Naive thymus-derived CD4-positive, alpha-beta T cell (primary cell): ENCODE measurements at regions of chr16 and their contacts with region 1.

Region 1: DNA sequence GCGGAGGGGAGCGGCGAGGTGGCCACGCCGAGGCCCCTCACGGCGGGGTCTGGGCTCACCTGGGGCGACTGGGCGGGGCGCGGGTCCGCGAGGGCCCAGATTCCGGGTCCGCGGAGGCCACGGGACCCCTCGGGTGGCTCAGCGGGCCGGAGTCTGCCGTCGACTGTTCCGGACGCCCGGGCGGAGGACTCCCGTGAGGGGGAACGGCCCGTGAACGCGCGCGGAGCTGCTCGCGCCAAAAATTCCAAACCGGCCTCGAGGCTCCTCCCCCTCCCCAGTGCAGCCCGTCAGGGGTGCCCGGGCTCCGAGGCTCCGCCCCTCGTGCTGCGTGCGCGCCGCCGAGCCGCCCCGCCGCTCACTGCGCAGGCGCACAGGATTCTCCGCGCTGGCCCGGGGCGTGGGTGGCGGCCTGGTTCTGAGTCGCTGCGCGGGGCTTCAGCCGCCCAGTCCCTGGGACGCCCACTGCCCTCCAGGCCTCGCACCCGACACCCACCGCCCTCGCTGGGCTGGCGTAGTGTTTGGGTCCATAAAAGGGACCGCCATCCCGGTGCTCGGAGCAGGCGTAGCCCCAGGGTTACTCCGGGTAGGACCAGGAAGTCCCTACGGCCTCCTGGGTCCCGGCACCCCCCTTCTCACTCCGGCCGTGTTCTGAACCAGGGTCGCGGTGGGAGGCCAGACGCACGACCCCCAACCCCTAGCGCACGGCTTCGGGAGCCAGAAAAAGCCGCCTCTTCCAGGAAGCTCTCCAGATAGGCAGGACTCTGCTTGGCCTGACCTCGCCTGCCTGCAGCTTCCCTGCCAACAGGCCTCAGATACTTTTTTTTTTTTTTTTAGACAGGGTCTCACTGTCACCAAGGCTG is at the start of gene PKMYT1:
- DNase-seq: peak; percentile 86 to 100 (median 96)
- ATAC-seq: peak; percentile 97
- H3K4me3 ChIP-seq: peak within 1 kb of the TSS; percentile 73
- H3K4me3 Mint-ChIP-seq: peak within 1 kb of the TSS; percentile 72 to 91 (median 82)
- H3K27ac ChIP-seq: peak within 1 kb of the TSS; percentile 94
- H3K27ac Mint-ChIP-seq: peak within 1 kb of the TSS in 8 of 9 donors; percentile 65 to 89 (median 78)
- H3K4me1 ChIP-seq: peaks cover 5 to 6% of the 10 kb centered on the region in 2 donors
- H3K4me1 Mint-ChIP-seq: peaks cover 9 to 29% (median 14%) of the 10 kb centered on the region in 7 donors
- H3K27me3 ChIP-seq: no peaks in the 10 kb centered on the region
- H3K27me3 Mint-ChIP-seq: peaks cover 0 to 2% (median 0%) of the 10 kb centered on the region in 5 donors
- total RNA-seq, gene PKMYT1: 0.93 to 89.1 TPM in 2 of 5 experiments, not detected in the others

Region 2: GRCh38 chr16:2883027-2883851 is 97.2 kb before region 1 on chr16 and contains the start of gene FLYWCH2:
- CTCF ChIA-PET with region 1: no interaction called
- POLR2A ChIA-PET with region 1: interaction called, 3 read pairs
- intact Hi-C with region 1: loop called in 1 of 2 experiments (anchors 5 kb)
- DNase-seq: peak; percentile 98 to 100 (median 100)
- ATAC-seq: peak; percentile 89
- H3K4me3 ChIP-seq: peak within 1 kb of the TSS; percentile 69
- H3K4me3 Mint-ChIP-seq: peak within 1 kb of the TSS; percentile 90 to 97 (median 94)
- H3K27ac ChIP-seq: peak within 1 kb of the TSS; percentile 84
- H3K27ac Mint-ChIP-seq: peak within 1 kb of the TSS; percentile 93 to 99 (median 97)
- H3K4me1 ChIP-seq: peaks cover 6% of the 10 kb centered on the region in 2 donors
- H3K4me1 Mint-ChIP-seq: peaks cover 0 to 18% (median 13%) of the 10 kb centered on the region in 7 donors
- H3K27me3 ChIP-seq: no peaks in the 10 kb centered on the region
- H3K27me3 Mint-ChIP-seq: no peaks in the 10 kb centered on the region
- total RNA-seq, gene FLYWCH2: 13.6 to 30.4 (median 24.0) TPM

Region 3: GRCh38 chr16:2911580-2912329 is 68.7 kb before region 1 on chr16 and contains the start of gene FLYWCH1:
- CTCF ChIA-PET with region 1: no interaction called
- POLR2A ChIA-PET with region 1: interaction called, 3 read pairs
- intact Hi-C with region 1: loop called in 1 of 2 experiments (anchors 5 kb)
- DNase-seq: peak; percentile 94 to 99 (median 97)
- ATAC-seq: peak; percentile 99
- H3K4me3 ChIP-seq: peak within 1 kb of the TSS; percentile 85
- H3K4me3 Mint-ChIP-seq: peak within 1 kb of the TSS; percentile 80 to 97 (median 92)
- H3K27ac ChIP-seq: peak within 1 kb of the TSS; percentile 78
- H3K27ac Mint-ChIP-seq: peak within 1 kb of the TSS; percentile 80 to 96 (median 87)
- H3K4me1 ChIP-seq: peaks cover 7 to 8% of the 10 kb centered on the region in 2 donors
- H3K4me1 Mint-ChIP-seq: peaks cover 11 to 39% (median 30%) of the 10 kb centered on the region in 7 donors
- H3K27me3 ChIP-seq: no peaks in the 10 kb centered on the region
- H3K27me3 Mint-ChIP-seq: peaks cover 0 to 10% (median 0%) of the 10 kb centered on the region in 5 donors
- total RNA-seq, gene FLYWCH1: 48.6 to 149 (median 87.0) TPM

Region 4: GRCh38 chr16:2926650-2927646 is 53.5 kb before region 1 on chr16:
- CTCF ChIA-PET with region 1: interaction called, 3 read pairs
- POLR2A ChIA-PET with region 1: no interaction called
- intact Hi-C with region 1: loop called in 1 of 2 experiments (anchors 1 kb)
- DNase-seq: peak; percentile 64 to 91 (median 84)
- ATAC-seq: peak; percentile 100
- H3K4me3 ChIP-seq: no peak overlapping the region
- H3K4me3 Mint-ChIP-seq: peak overlapping the region in 7 of 10 donors; percentile 0 to 48 (median 29)
- H3K27ac ChIP-seq: no peak overlapping the region
- H3K27ac Mint-ChIP-seq: peak overlapping the region in 7 of 9 donors; percentile 0 to 63 (median 48)
- H3K4me1 ChIP-seq: peaks cover 5 to 10% of the 10 kb centered on the region in 2 donors
- H3K4me1 Mint-ChIP-seq: peaks cover 9 to 19% (median 16%) of the 10 kb centered on the region in 7 donors
- H3K27me3 ChIP-seq: no peaks in the 10 kb centered on the region
- H3K27me3 Mint-ChIP-seq: no peaks in the 10 kb centered on the region

Region 5: GRCh38 chr16:2960183-2961032 is 20.0 kb before region 1 on chr16:
- CTCF ChIA-PET with region 1: interaction called, 8 read pairs
- POLR2A ChIA-PET with region 1: interaction called, 17 read pairs
- intact Hi-C with region 1: loop called in 1 of 2 experiments (anchors 1 kb)
- DNase-seq: no peak
- ATAC-seq: no peak
- H3K4me3 ChIP-seq: no peak overlapping the region
- H3K4me3 Mint-ChIP-seq: peak overlapping the region in 1 of 10 donors; percentile 37
- H3K27ac ChIP-seq: no peak overlapping the region
- H3K27ac Mint-ChIP-seq: peak overlapping the region in 1 of 9 donors; percentile 18
- H3K4me1 ChIP-seq: peaks cover 9 to 24% of the 10 kb centered on the region in 2 donors
- H3K4me1 Mint-ChIP-seq: peaks cover 5 to 23% (median 15%) of the 10 kb centered on the region in 7 donors
- H3K27me3 ChIP-seq: peaks cover 5 to 6% of the 10 kb centered on the region in 2 donors
- H3K27me3 Mint-ChIP-seq: peaks cover 5 to 31% (median 20%) of the 10 kb centered on the region in 5 donors

Region 6: GRCh38 chr16:2968738-2969544 is 11.5 kb before region 1 on chr16 and contains the start of gene PAQR4:
- CTCF ChIA-PET with region 1: interaction called, 4 read pairs
- POLR2A ChIA-PET with region 1: interaction called, 17 read pairs
- intact Hi-C with region 1: loop called (anchors 1 kb)
- DNase-seq: peak; percentile 49 to 91 (median 71)
- ATAC-seq: peak; percentile 88
- H3K4me3 ChIP-seq: peak within 1 kb of the TSS; percentile 64
- H3K4me3 Mint-ChIP-seq: peak within 1 kb of the TSS; percentile 59 to 80 (median 75)
- H3K27ac ChIP-seq: no peak within 1 kb of the TSS
- H3K27ac Mint-ChIP-seq: peak within 1 kb of the TSS in 2 of 9 donors; percentile 16 to 70
- H3K4me1 ChIP-seq: peaks cover 19 to 28% of the 10 kb centered on the region in 2 donors
- H3K4me1 Mint-ChIP-seq: peaks cover 10 to 32% (median 24%) of the 10 kb centered on the region in 7 donors
- H3K27me3 ChIP-seq: peaks cover 0 to 28% of the 10 kb centered on the region in 2 donors
- H3K27me3 Mint-ChIP-seq: peaks cover 10 to 26% (median 16%) of the 10 kb centered on the region in 5 donors
- total RNA-seq, gene PAQR4: 0.40 to 39.4 (median 0.79) TPM

Region 7: GRCh38 chr16:3003582-3004302 is 23.3 kb after region 1 on chr16:
- CTCF ChIA-PET with region 1: interaction called, 3 read pairs
- POLR2A ChIA-PET with region 1: interaction called, 6 read pairs
- intact Hi-C with region 1: loop called (anchors 1 to 2 kb)
- DNase-seq: peak; percentile 78 to 98 (median 96)
- ATAC-seq: peak; percentile 99
- H3K4me3 ChIP-seq: no peak overlapping the region
- H3K4me3 Mint-ChIP-seq: peak overlapping the region; percentile 76 to 82 (median 80)
- H3K27ac ChIP-seq: no peak overlapping the region
- H3K27ac Mint-ChIP-seq: peak overlapping the region in 5 of 9 donors; percentile 41 to 81 (median 45)
- H3K4me1 ChIP-seq: peaks cover 19 to 21% of the 10 kb centered on the region in 2 donors
- H3K4me1 Mint-ChIP-seq: peaks cover 18 to 32% (median 25%) of the 10 kb centered on the region in 7 donors
- H3K27me3 ChIP-seq: no peaks in the 10 kb centered on the region
- H3K27me3 Mint-ChIP-seq: peaks cover 0 to 17% (median 0%) of the 10 kb centered on the region in 5 donors